ENCODE measurements at regions of chr20 and their contacts with region 1.

Region 1: GRCh38 chr20:20860078-20860806 is 147.8 kb upstream of the RALGAPA2 start:
- DNase-seq: peak; percentile 87
- ATAC-seq: peak; percentile 93
- H3K4me3 ChIP-seq: no peak overlapping the region
- H3K27ac ChIP-seq: no peak overlapping the region
- H3K4me1 ChIP-seq: peaks cover 6% of the 10 kb centered on the region; the same call in 1 of the 2 replicates
- H3K27me3 ChIP-seq: no peaks in the 10 kb centered on the region
- CTCF ChIP-seq: peak; percentile 98
- EP300 ChIP-seq: no peak
- POLR2A ChIP-seq: no peak
- RAD21 ChIP-seq: peak; percentile 91

Region 2: GRCh38 chr20:20969701-20970280 is 109.5 kb after region 1 on chr20:
- CTCF ChIA-PET with region 1: no interaction called
- POLR2A ChIA-PET with region 1: no interaction called
- in situ Hi-C with region 1: no loop called
- intact Hi-C with region 1: loop called (anchors 5 kb)
- DNase-seq: no peak
- ATAC-seq: no peak
- H3K4me3 ChIP-seq: no peak overlapping the region
- H3K27ac ChIP-seq: no peak overlapping the region
- H3K4me1 ChIP-seq: peaks cover 22% of the 10 kb centered on the region
- H3K27me3 ChIP-seq: peaks cover 7 to 41% of the 10 kb centered on the region in 2 experiments; a peak in 4 of 5 replicates
- CTCF ChIP-seq: no peak
- EP300 ChIP-seq: no peak
- POLR2A ChIP-seq: no peak
- RAD21 ChIP-seq: no peak

Region 3: GRCh38 chr20:21027569-21027968 is 167.3 kb after region 1 on chr20:
- CTCF ChIA-PET with region 1: no interaction called
- POLR2A ChIA-PET with region 1: no interaction called
- in situ Hi-C with region 1: loop called (anchors 10 kb)
- intact Hi-C with region 1: no loop called
- DNase-seq: peak; percentile 75
- ATAC-seq: peak; percentile 96
- H3K4me3 ChIP-seq: no peak overlapping the region
- H3K27ac ChIP-seq: no peak overlapping the region
- H3K4me1 ChIP-seq: peaks cover 58% of the 10 kb centered on the region
- H3K27me3 ChIP-seq: no peaks in the 10 kb centered on the region
- CTCF ChIP-seq: no peak
- EP300 ChIP-seq: no peak
- POLR2A ChIP-seq: no peak
- RAD21 ChIP-seq: peak; percentile 23; the same call in 1 of the 2 replicates

Region 4: DNA sequence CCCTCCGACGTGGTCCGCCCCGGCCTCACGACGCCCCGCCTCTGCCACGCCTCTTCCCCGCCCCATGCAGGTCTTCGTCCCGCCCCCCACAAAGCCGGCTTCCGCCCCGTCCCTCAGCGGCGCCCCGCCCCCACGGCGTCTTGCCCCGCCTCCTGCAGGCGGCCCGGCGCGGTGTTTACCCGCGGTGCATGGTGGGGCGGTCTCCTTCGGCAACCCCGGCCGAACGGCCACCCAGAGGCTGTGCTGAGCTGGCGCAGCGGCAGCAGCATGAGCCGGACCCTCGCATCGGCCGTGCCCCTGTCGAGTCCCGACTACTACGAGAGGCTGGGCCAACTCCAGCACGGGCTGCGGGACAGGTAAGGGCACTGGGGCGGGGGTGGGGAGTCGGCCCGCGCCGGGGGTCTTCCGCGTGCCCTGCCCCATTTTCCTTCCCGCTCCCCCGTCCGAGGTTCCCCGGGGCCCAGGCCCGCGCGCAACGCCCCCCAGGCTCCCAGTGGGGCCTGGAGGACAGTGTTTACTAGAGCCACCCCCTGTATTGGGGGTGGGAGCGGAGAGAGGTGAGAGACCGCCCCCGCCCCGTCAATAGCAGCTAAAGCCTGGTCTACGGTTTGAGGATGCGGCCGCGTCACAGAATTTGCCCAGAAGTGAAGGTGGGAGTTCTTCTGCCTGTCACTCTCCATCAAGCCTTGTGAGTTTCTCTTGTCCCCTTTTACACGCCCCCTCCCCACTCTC is 265.8 kb after region 1 on chr20 and contains the start of gene KIZ:
- CTCF ChIA-PET with region 1: interaction called, 4 read pairs
- POLR2A ChIA-PET with region 1: no interaction called
- in situ Hi-C with region 1: loop called (anchors 10 kb)
- intact Hi-C with region 1: loop called (anchors 1 kb)
- DNase-seq: peak; percentile 93
- ATAC-seq: peak; percentile 97
- H3K4me3 ChIP-seq: peak within 1 kb of the TSS; percentile 86 to 94 (median 93)
- H3K27ac ChIP-seq: peak within 1 kb of the TSS; percentile 80
- H3K4me1 ChIP-seq: peaks cover 48% of the 10 kb centered on the region
- H3K27me3 ChIP-seq: no peaks in the 10 kb centered on the region; a peak in 1 of 5 replicates
- CTCF ChIP-seq: peak; percentile 70
- EP300 ChIP-seq: peak in 1 of 2 experiments; percentile 35; a peak in 1 of 4 replicates
- POLR2A ChIP-seq: peak; percentile 98
- RAD21 ChIP-seq: peak; percentile 90
- total RNA-seq, gene KIZ: 46.3 and 55.6 TPM in 2 replicates

Region 5: DNA sequence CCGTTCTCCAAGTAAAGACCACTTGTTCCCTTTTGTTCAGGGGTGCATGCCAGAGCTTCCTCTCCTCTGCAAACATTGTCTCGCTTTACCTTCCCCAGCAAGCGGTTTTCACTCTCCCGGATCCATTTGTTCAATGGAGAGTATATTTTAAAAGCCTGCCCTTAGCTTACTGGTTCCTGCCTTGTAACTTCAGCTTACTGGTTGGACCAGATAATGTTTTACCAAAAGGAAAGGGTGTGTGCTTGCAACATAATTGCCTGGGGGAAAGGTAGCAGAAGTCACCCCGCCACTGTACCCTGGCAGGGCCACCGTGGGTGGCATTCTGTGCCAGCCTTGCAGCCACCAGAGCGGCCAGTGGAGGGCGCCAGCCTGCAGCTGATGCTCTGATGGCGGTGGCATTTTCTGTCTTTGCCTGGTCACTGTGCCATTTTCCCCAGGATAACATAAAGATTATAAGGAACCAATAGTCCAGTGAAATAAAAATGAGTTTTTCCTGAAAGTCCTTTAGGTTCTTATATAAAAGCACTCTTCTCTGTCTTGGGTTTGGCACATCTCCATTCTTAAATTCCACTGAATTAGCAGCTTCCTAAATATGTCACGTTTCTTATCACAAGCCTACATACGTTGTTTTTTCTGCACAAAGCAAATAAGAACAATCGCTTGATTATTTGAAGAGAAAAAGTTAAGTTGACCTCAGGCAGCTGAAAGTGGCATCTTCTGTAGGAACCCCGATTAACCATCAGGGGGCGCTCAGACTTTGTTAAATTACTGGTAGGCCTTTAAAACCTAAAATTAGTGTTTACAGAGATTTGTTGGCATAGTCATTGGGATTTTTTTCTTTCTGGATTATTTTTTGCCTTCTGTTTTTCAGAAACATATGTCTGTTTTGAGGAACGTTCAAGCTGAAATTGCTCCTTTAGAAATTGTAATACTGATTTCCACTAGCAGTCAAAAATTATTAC is 375.5 kb after region 1 on chr20:
- CTCF ChIA-PET with region 1: interaction called, 4 read pairs
- POLR2A ChIA-PET with region 1: no interaction called
- in situ Hi-C with region 1: loop called (anchors 10 kb)
- intact Hi-C with region 1: loop called (anchors 2 kb)
- DNase-seq: peak; percentile 77
- ATAC-seq: peak; percentile 88
- H3K4me3 ChIP-seq: no peak overlapping the region
- H3K27ac ChIP-seq: no peak overlapping the region
- H3K4me1 ChIP-seq: peaks cover 6% of the 10 kb centered on the region; the same call in 1 of the 2 replicates
- H3K27me3 ChIP-seq: no peaks in the 10 kb centered on the region
- CTCF ChIP-seq: peak; percentile 91
- EP300 ChIP-seq: no peak
- POLR2A ChIP-seq: no peak
- RAD21 ChIP-seq: peak; percentile 79

Region 6: DNA sequence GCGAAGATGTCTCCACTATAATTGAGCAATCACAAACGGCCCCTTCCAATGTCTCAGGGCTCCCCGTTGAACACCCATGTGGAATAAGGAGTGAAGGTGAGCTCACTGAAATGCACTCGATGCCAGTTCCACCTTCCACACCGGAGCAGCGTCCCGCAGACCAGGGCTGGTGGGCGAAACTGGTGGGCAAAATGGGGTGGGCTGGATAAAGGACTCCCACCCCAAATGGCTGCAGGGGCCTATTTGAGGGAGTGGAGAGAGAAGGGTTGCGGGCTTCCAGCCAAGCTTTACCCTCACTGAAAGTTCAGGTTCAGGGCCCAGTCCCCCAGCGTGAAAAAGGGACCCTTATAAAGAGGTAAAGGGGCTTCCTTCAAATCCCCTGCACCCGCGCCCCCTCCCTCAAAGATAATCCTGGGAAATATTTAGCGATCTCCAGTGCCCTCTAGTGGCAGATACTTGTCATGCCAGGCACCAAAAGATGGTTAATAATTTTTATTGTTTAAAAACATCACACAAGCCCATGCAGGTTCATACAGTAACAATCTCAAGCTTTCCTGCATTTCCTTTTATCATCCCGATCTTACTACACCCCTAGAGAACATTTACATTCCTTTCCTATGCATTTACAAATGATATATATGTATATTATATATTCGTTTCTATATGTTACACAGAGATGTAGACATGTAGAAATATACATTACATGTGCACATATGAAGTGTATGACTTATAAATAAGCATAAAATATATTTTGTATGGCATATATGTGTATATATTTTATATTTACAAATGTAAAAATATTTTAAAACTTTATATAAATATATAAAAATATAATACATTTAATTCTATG is 711.8 kb after region 1 on chr20:
- CTCF ChIA-PET with region 1: interaction called, 5 read pairs
- POLR2A ChIA-PET with region 1: no interaction called
- in situ Hi-C with region 1: no loop called
- intact Hi-C with region 1: loop called (anchors 5 kb)
- DNase-seq: peak; percentile 23
- ATAC-seq: peak; percentile 48
- H3K4me3 ChIP-seq: no peak overlapping the region
- H3K27ac ChIP-seq: no peak overlapping the region
- H3K4me1 ChIP-seq: no peaks in the 10 kb centered on the region
- H3K27me3 ChIP-seq: peaks cover 4 to 37% of the 10 kb centered on the region in 2 experiments; a peak in 3 of 5 replicates
- CTCF ChIP-seq: peak; percentile 86
- EP300 ChIP-seq: no peak
- POLR2A ChIP-seq: no peak
- RAD21 ChIP-seq: peak; percentile 79

Measured in HepG2 (cell line).